OCI-LY7 (cell line): ENCODE measurements at regions of chr5 and their contacts with region 1.

Region 1: GRCh38 chr5:180291943-180292831 is at the start of gene MAPK9:
- DNase-seq: peak; percentile 93
- H3K4me3 ChIP-seq: peak within 1 kb of the TSS; percentile 75
- H3K27ac ChIP-seq: peak within 1 kb of the TSS; percentile 76
- H3K4me1 ChIP-seq: peaks cover 33% of the 10 kb centered on the region
- CTCF ChIP-seq: 0 out of 2 replicates have a peak, but pooled peaks have one; percentile 13
- total RNA-seq, gene MAPK9: 19.9 and 21.8 TPM in 2 replicates

Region 2: GRCh38 chr5:178322736-178323540 is 1969.2 kb before region 1 on chr5:
- CTCF ChIA-PET with region 1: no interaction called
- POLR2A ChIA-PET with region 1: no interaction called
- intact Hi-C with region 1: no loop called
- DNase-seq: no peak
- H3K4me3 ChIP-seq: no peak overlapping the region
- H3K27ac ChIP-seq: no peak overlapping the region
- H3K4me1 ChIP-seq: no peaks in the 10 kb centered on the region
- CTCF ChIP-seq: no peak

Region 3: GRCh38 chr5:179907570-179908324 is 384.4 kb before region 1 on chr5 and contains the start of gene TBC1D9B:
- CTCF ChIA-PET with region 1: no interaction called
- POLR2A ChIA-PET with region 1: no interaction called
- intact Hi-C with region 1: loop called (anchors 5 kb)
- DNase-seq: peak; percentile 85
- H3K4me3 ChIP-seq: peak within 1 kb of the TSS; percentile 86
- H3K27ac ChIP-seq: peak within 1 kb of the TSS; percentile 26
- H3K4me1 ChIP-seq: peaks cover 19% of the 10 kb centered on the region
- CTCF ChIP-seq: peak; percentile 31; the same call in 1 of the 2 replicates
- total RNA-seq, gene TBC1D9B: 49.4 and 52.2 TPM in 2 replicates

Region 4: DNA sequence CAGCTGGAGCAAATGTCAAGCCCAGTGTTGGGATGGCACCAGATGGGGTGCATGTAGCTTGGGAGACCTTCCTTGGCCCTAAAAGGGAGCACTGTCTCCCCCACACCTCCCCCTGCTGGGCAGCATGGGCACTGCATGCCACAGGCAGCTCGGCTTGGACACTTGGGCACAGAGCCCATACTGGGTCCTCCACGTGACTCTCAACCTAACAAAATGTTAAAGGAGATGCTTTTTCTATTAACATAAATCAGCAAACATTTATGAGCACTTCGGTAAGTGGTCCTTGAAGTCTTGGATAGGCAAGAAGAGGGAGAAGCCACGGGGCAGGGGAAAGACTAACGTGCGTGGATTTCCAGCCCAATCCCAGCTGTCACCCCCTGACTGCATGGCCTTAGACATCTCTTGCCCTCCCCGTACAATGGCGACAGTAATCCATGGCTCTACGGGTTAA is 23.6 kb after region 1 on chr5:
- CTCF ChIA-PET with region 1: interaction called, 7 read pairs
- POLR2A ChIA-PET with region 1: interaction called, 7 read pairs
- intact Hi-C with region 1: loop called (anchors 1 kb)
- DNase-seq: peak; percentile 54
- H3K4me3 ChIP-seq: no peak overlapping the region
- H3K27ac ChIP-seq: no peak overlapping the region
- H3K4me1 ChIP-seq: no peaks in the 10 kb centered on the region
- CTCF ChIP-seq: peak; percentile 95

Region 5: DNA sequence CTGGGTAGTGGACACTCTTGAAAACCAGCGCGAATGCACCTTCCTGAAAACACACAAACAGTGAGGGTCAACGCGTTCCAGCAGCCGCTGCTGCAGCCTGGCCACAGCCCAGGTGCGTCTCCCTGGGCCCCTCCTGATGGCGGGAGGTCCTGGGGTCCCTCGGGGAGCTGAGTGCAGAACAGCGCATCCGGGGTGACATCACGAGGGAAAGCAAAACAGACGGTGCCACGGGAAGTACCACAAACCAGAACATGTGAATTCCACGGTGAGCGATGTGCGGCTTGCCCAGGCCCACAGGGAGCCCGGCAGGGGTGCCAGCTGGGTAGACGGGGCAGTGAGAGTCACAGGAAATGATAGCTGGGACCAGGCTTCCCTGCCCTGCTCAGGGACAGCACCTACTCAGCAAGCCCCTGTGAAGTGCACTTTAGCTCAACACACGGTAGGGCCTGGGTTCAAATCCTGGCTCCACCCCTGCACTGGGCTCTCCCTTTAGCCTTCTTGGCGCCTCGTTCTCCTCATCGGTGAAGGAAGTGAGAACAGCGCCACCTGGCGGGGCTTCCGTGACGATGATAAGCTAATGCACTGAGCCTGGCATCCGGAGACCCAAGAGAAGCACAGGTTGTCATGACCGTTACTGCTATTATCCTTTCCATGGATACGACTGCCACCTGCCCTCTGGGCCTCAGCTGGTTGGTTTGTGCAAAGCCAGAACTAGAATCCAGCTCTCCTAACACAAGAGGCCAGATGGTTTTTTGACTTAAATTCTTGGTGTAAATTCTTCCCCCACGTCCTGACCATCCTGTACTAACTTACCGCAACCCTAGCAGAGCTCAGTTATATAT is 36.3 kb after region 1 on chr5:
- CTCF ChIA-PET with region 1: no interaction called
- POLR2A ChIA-PET with region 1: no interaction called
- intact Hi-C with region 1: loop called (anchors 1 kb)
- DNase-seq: peak; percentile 83
- H3K4me3 ChIP-seq: no peak overlapping the region
- H3K27ac ChIP-seq: no peak overlapping the region
- H3K4me1 ChIP-seq: no peaks in the 10 kb centered on the region
- CTCF ChIP-seq: peak; percentile 83

Region 6: GRCh38 chr5:180470966-180471582 is 178.9 kb after region 1 on chr5:
- CTCF ChIA-PET with region 1: no interaction called
- POLR2A ChIA-PET with region 1: no interaction called
- intact Hi-C with region 1: loop called (anchors 1 kb)
- DNase-seq: peak; percentile 62
- H3K4me3 ChIP-seq: no peak overlapping the region
- H3K27ac ChIP-seq: no peak overlapping the region
- H3K4me1 ChIP-seq: no peaks in the 10 kb centered on the region
- CTCF ChIP-seq: peak; percentile 94